Cardiac septum (tissue), 1 donor: ENCODE measurements at regions of chr9 and their contacts with region 1.

Region 1: DNA sequence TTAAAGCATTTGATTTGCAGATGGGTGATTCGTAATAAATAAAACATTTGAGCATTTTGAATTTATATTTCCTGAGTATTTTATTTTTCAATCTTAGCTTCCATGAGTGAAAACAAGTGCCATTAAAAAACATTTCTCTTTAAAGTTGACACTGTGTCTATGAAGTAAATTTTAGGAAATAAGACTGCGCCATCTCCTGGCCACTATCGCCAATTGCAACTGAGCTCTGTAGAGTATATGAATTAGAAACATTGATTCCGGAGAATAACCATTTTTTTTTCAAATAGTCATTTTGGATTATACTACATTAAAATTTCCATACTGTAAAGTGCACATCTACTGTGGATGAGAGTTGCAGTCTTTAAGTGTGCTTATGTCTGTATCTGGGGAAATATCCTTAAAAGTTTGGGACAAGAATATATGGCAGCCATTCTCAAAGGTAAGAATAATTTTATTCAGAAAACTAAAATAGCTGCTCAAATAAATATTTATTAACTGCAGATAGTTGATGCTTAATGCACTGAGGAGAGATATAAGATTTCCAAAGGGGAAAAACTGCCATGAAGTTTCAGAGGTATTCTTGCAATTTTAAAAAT is 5.9 kb downstream of the DMRTA1 start:
- DNase-seq: no peak

Region 2: DNA sequence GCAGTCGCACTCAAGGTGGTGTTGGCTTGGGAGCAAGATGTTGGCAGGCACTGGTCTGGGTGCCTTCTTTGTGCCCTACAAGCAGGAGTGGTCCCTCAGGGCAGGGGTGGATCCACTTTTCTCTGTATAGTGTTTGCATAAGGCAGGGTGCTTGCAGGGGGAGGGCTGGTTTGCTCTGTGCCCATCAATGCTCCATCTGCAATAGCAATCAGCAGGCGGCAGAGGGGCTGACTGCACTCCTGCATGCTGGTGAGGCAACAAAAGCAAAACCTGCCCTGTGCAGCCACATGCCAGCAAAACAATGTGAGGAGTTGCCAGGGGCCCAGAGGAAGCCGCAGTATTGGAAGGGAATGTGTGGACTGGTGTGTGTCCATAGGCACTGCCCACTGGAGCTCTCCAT is 252.2 kb before region 1 on chr9:
- intact Hi-C with region 1: no loop called
- DNase-seq: no peak

Region 3: GRCh38 chr9:22244141-22245011 is 208.1 kb before region 1 on chr9:
- intact Hi-C with region 1: loop called (anchors 5 kb)
- DNase-seq: no peak